MCF 10A (cell line): ENCODE measurements at regions of chr1 and their contacts with region 1.

Region 1: DNA sequence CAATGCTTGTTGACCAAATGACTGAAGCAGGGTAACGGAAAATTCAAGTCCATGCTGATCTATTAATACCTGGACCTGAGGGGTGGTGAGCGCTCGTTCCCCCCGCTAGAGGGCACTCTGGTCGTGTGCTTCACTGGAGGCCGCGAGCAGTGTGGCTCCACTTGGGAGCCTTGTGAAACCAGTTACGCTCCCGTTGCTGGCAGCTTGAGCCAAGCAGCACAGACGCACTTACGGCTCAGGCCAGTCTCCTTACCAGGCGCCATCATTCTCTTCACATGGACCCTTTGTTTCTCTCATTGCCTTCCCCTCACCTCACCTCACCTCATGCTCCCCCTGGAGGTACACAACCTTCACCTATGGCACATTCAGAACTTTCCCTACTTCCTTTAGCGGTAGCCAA is 49.7 kb upstream of the TSPAN2 start:
- DNase-seq: peak; percentile 90
- H3K4me3 Mint-ChIP-seq: no peak overlapping the region
- H3K27ac Mint-ChIP-seq: no peak overlapping the region
- H3K4me1 Mint-ChIP-seq: peaks cover 38% of the 10 kb centered on the region
- H3K27me3 Mint-ChIP-seq: no peaks in the 10 kb centered on the region
- CTCF ChIP-seq: peak; percentile 86

Region 2: DNA sequence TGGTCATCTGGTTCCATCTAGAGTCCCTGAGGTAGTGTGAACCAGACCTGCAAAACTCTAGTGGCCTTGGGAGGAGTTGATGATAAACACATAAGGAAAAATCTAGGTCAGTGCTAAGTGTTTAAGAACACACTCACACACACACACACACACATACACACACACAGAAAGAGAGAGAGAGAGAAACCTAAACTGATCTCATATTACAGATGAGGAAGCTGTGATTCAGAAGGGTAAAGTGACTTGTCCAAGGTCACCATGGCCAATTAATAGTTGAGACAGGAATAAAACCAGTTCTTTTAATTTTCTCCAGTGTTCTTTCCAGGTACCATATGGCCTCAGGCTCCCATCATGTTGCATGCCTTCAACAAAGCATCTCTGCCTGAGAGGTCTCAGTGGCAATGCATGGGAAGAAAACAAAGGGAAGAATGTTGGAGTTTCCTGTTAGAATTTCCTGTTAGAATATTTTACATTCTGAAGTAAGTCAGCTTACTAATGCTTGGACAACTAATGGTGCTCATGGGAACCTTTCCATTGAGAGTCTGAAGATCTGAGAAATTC is 27.6 kb after region 1 on chr1:
- CTCF ChIA-PET with region 1: interaction called, 5 read pairs
- POLR2A ChIA-PET with region 1: no interaction called
- intact Hi-C with region 1: loop called (anchors 1 kb)
- DNase-seq: no peak
- H3K4me3 Mint-ChIP-seq: no peak overlapping the region
- H3K27ac Mint-ChIP-seq: no peak overlapping the region
- H3K4me1 Mint-ChIP-seq: peaks cover 44% of the 10 kb centered on the region
- H3K27me3 Mint-ChIP-seq: no peaks in the 10 kb centered on the region
- CTCF ChIP-seq: no peak

Region 3: GRCh38 chr1:115251856-115252255 is 112.9 kb after region 1 on chr1:
- CTCF ChIA-PET with region 1: no interaction called
- POLR2A ChIA-PET with region 1: no interaction called
- intact Hi-C with region 1: no loop called
- DNase-seq: peak; percentile 47
- H3K4me3 Mint-ChIP-seq: no peak overlapping the region
- H3K27ac Mint-ChIP-seq: peak overlapping the region; percentile 90
- H3K4me1 Mint-ChIP-seq: peaks cover 17% of the 10 kb centered on the region
- H3K27me3 Mint-ChIP-seq: no peaks in the 10 kb centered on the region
- CTCF ChIP-seq: no peak

Region 4: GRCh38 chr1:115332813-115333608 is 194.0 kb after region 1 on chr1:
- CTCF ChIA-PET with region 1: interaction called, 4 read pairs
- POLR2A ChIA-PET with region 1: interaction called, 4 read pairs
- intact Hi-C with region 1: loop called (anchors 1 kb)
- DNase-seq: peak; percentile 90
- H3K4me3 Mint-ChIP-seq: peak overlapping the region; percentile 19
- H3K27ac Mint-ChIP-seq: peak overlapping the region; percentile 98
- H3K4me1 Mint-ChIP-seq: peaks cover 23% of the 10 kb centered on the region
- H3K27me3 Mint-ChIP-seq: no peaks in the 10 kb centered on the region
- CTCF ChIP-seq: no peak

Region 5: GRCh38 chr1:115419571-115419970 is 280.6 kb after region 1 on chr1:
- CTCF ChIA-PET with region 1: no interaction called
- POLR2A ChIA-PET with region 1: no interaction called
- intact Hi-C with region 1: no loop called
- DNase-seq: no peak
- H3K4me3 Mint-ChIP-seq: no peak overlapping the region
- H3K27ac Mint-ChIP-seq: no peak overlapping the region
- H3K4me1 Mint-ChIP-seq: no peaks in the 10 kb centered on the region
- H3K27me3 Mint-ChIP-seq: no peaks in the 10 kb centered on the region
- CTCF ChIP-seq: no peak

Region 6: DNA sequence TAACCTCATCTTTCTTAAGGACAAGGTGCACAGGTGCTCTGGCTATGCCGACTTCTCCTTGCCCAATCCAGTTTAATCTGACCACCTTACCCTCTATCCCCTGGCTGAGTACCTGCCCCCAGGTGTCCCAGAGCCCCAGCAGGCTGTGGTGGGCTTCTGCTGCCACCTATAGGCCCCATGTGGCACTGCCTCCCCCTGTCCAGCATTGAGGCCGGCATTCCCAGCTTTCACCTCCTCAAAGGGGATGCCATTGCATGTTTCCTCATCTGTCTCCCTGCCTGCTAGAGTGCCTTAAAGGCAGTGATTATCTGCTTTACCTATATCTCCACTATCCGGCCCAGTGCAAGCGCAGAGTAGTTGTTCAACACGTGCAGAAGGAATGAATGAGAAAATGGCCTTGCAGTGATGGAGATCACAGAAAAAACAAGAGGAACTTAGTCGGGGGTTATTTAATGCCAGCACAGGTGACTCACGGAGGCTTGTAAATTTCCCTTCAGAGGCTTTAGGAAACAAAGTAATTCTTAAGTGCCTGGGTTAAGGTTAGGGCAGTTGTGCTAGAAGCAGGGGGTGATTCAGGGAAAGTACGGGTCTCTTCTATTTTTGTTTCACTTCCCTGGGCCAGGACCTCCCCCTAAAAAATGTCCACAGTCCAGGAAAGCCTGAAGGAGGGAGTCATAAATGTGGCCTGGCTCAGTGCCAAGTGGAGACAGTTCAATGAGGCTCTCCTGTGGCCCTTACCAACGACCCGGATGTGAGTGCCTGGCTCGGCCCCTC is 330.9 kb after region 1 on chr1:
- CTCF ChIA-PET with region 1: interaction called, 382 read pairs
- POLR2A ChIA-PET with region 1: interaction called, 4 read pairs
- intact Hi-C with region 1: loop called (anchors 1 kb)
- DNase-seq: peak; percentile 72
- H3K4me3 Mint-ChIP-seq: no peak overlapping the region
- H3K27ac Mint-ChIP-seq: no peak overlapping the region
- H3K4me1 Mint-ChIP-seq: peaks cover 20% of the 10 kb centered on the region
- H3K27me3 Mint-ChIP-seq: no peaks in the 10 kb centered on the region
- CTCF ChIP-seq: peak; percentile 96

Region 7: GRCh38 chr1:115595279-115596079 is 456.5 kb after region 1 on chr1:
- CTCF ChIA-PET with region 1: interaction called, 194 read pairs
- POLR2A ChIA-PET with region 1: interaction called, 3 read pairs
- intact Hi-C with region 1: loop called (anchors 1 kb)
- DNase-seq: peak; percentile 92
- H3K4me3 Mint-ChIP-seq: no peak overlapping the region
- H3K27ac Mint-ChIP-seq: no peak overlapping the region
- H3K4me1 Mint-ChIP-seq: no peaks in the 10 kb centered on the region
- H3K27me3 Mint-ChIP-seq: no peaks in the 10 kb centered on the region
- CTCF ChIP-seq: peak; percentile 96